Sigmoid colon (tissue), 7 donors: ENCODE measurements at regions of chr5 and their contacts with region 1.

Region 1: GRCh38 chr5:9544502-9545135 is 1.3 kb downstream of the SEMA5A start:
- DNase-seq: peak; percentile 92
- H3K4me3 ChIP-seq: peak overlapping the region; percentile 68 to 84 (median 78)
- H3K27ac ChIP-seq: peak overlapping the region in 3 of 4 donors; percentile 10 to 90 (median 87)
- H3K4me1 ChIP-seq: peaks cover 0 to 35% (median 20%) of the 10 kb centered on the region in 4 donors
- H3K27me3 ChIP-seq: no peaks in the 10 kb centered on the region
- CTCF ChIP-seq: peak; percentile 48 to 92 (median 79)
- EP300 ChIP-seq: no peak
- POLR2A ChIP-seq: no peak

Region 2: GRCh38 chr5:7868773-7869473 is 1675.7 kb before region 1 on chr5 and contains the starts of genes FASTKD3 and MTRR:
- intact Hi-C with region 1: loop called (anchors 10 kb)
- DNase-seq: peak; percentile 96
- H3K4me3 ChIP-seq: peak within 1 kb of the TSS; percentile 89 to 99 (median 99)
- H3K27ac ChIP-seq: peak within 1 kb of the TSS; percentile 88 to 92 (median 90)
- H3K4me1 ChIP-seq: peaks cover 0 to 33% (median 26%) of the 10 kb centered on the region in 4 donors
- H3K27me3 ChIP-seq: no peaks in the 10 kb centered on the region
- CTCF ChIP-seq: no peak
- EP300 ChIP-seq: peak in 1 of 4 donors; percentile 37
- POLR2A ChIP-seq: peak; percentile 48 to 79
- total RNA-seq, gene FASTKD3: 3.0 to 11.1 (median 6.1) TPM
- total RNA-seq, gene MTRR: 44.4 to 50.4 (median 49.9) TPM

Region 3: GRCh38 chr5:9284781-9285307 is 259.8 kb before region 1 on chr5:
- intact Hi-C with region 1: loop called (anchors 10 kb)
- DNase-seq: no peak
- H3K4me3 ChIP-seq: no peak overlapping the region
- H3K27ac ChIP-seq: peak overlapping the region in 3 of 4 donors; percentile 17 to 57 (median 28)
- H3K4me1 ChIP-seq: no peaks in the 10 kb centered on the region
- H3K27me3 ChIP-seq: no peaks in the 10 kb centered on the region
- CTCF ChIP-seq: no peak
- EP300 ChIP-seq: no peak
- POLR2A ChIP-seq: no peak

Region 4: DNA sequence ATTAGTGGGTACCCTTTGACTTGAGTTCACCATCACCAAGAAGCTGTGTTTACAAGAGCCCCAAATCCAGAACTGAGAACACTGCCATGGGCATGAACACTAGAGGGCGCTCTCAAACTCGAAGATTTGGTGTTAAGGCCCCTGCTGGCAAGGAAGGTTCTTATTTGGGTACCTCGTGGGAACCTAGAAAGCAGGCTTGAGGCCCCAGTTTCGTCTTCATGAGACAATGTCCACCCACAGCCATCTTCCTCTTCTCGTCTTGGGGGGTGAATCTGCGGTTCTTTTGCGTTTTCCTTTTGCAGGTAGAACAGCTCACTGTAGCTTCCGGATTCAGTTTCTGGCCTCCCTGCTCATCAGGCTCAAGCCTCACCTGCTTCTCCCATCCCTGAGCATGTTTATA is 182.8 kb before region 1 on chr5:
- intact Hi-C with region 1: loop called (anchors 5 kb)
- DNase-seq: no peak
- H3K4me3 ChIP-seq: no peak overlapping the region
- H3K27ac ChIP-seq: no peak overlapping the region
- H3K4me1 ChIP-seq: peaks cover 0 to 14% (median 0%) of the 10 kb centered on the region in 4 donors
- H3K27me3 ChIP-seq: no peaks in the 10 kb centered on the region
- CTCF ChIP-seq: peak in 2 of 4 experiments; percentile 35 to 47
- EP300 ChIP-seq: no peak
- POLR2A ChIP-seq: no peak

Region 5: DNA sequence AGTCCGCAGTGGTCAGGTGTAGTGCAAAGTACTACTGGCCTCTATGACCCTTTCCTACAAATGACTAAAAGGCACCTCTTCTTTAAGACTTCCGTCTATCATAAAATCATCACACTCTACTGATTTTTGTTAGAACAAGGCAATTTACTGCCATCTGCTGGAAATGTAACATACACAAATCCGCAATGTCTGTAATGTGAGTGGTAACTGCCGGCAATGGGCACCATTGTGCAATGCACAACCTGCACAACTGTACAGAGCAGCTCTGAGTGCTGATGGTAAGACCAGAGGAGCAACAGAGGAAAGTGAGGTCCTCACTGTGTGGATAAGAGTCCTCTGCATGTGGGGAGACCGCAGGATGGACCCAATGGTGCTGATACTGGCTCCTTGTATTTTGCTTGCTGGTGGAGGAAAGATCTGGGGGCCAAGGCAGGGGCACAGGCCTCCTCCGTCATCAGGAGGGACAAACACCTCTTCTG is 601.3 kb after region 1 on chr5:
- intact Hi-C with region 1: loop called (anchors 10 kb)
- DNase-seq: no peak
- H3K4me3 ChIP-seq: no peak overlapping the region
- H3K27ac ChIP-seq: no peak overlapping the region
- H3K4me1 ChIP-seq: no peaks in the 10 kb centered on the region
- H3K27me3 ChIP-seq: no peaks in the 10 kb centered on the region
- CTCF ChIP-seq: no peak
- EP300 ChIP-seq: no peak
- POLR2A ChIP-seq: no peak

Region 6: DNA sequence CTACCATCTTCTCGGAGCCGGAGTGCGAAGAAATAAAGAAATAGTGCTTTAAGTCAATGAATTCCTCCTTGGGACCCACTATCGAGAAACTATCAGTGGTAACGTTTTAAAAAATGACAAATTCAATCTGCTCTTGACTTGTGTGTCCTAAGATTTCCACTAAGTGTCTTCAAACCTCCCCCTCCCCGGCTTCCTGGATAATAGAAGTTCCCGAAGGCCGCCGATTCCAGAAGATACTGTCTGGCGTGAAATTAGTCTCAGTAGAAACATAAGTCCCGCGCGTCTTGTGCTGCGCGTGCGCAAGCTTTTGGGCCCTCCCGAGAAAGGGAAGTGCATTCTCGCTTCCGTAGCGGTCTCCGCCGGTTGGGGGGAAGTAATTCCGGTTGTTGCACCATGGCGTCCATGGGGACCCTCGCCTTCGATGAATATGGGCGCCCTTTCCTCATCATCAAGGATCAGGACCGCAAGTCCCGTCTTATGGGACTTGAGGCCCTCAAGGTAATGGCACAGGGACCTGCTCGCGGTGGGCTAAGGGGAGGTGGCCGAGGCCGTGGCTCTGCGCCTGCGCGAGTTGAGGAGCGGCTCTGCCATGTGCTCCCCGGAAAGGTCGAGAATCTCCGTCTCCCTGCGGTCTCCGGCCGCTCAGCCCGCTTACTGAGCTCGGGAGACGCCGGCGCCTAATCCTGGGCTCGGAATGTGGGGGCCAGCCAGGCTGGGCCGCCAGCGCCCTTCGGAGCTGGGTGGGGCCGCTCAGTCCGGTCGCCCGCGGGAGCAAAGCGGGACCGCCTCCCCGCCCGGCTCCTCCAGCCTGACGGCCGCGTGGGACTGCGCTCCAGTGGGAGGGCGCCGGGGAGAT is 705.6 kb after region 1 on chr5 and contains the start of gene CCT5:
- intact Hi-C with region 1: loop called (anchors 10 kb)
- DNase-seq: peak; percentile 98
- H3K4me3 ChIP-seq: peak within 1 kb of the TSS; percentile 73 to 93 (median 84)
- H3K27ac ChIP-seq: peak within 1 kb of the TSS; percentile 93 to 96 (median 94)
- H3K4me1 ChIP-seq: peaks cover 0 to 31% (median 23%) of the 10 kb centered on the region in 4 donors
- H3K27me3 ChIP-seq: no peaks in the 10 kb centered on the region
- CTCF ChIP-seq: no peak
- EP300 ChIP-seq: peak in 1 of 4 donors; percentile 65
- POLR2A ChIP-seq: peak in 1 of 2 donors; percentile 62
- total RNA-seq, gene CCT5: 63.4 to 124 (median 107) TPM